Activated CD8-positive, alpha-beta T cell treated with anti-CD3 and anti-CD28 coated beads, Interleukin-2, amount 10 ng/mL, durations not matched to agents 7 days and 5 days (primary cell): ENCODE measurements at regions of chr2 and their contacts with region 1.

Region 1: GRCh38 chr2:136384531-136385303 is 266.8 kb upstream of the CXCR4 start:
- DNase-seq: peak; percentile 71
- ATAC-seq: peak; percentile 65
- H3K4me3 Mint-ChIP-seq: no peak overlapping the region
- H3K27ac Mint-ChIP-seq: no peak overlapping the region
- H3K4me1 Mint-ChIP-seq: peaks cover 48% of the 10 kb centered on the region
- H3K27me3 Mint-ChIP-seq: peaks cover 7% of the 10 kb centered on the region

Region 2: GRCh38 chr2:135876066-135876711 is 508.5 kb before region 1 on chr2 and contains the start of gene MCM6:
- CTCF ChIA-PET with region 1: interaction called, 16 read pairs
- POLR2A ChIA-PET with region 1: interaction called, 9 read pairs
- DNase-seq: peak; percentile 100
- ATAC-seq: peak; percentile 94
- H3K4me3 Mint-ChIP-seq: peak within 1 kb of the TSS; percentile 80
- H3K27ac Mint-ChIP-seq: peak within 1 kb of the TSS; percentile 97
- H3K4me1 Mint-ChIP-seq: peaks cover 47% of the 10 kb centered on the region
- H3K27me3 Mint-ChIP-seq: no peaks in the 10 kb centered on the region
- total RNA-seq, gene MCM6: 144 to 145 TPM

Region 3: DNA sequence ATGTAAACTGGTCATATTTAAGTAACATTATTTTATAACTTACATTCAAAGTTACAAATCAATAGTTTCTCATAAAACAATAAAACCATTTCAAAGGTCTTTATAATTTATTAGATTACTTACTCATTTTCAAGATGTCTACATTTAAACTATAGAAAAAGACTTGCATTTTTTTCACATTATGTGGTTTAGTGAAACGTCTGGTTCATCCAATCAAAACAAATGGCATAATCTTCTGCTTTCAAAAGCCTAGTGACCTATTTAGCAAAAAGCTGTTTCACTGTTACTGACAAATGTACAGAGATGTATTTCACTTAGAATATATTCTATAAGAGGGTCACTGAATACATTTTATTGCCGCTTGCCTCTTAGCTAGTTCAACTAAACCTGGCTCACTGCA is 459.1 kb before region 1 on chr2:
- CTCF ChIA-PET with region 1: interaction called, 12 read pairs
- POLR2A ChIA-PET with region 1: no interaction called
- DNase-seq: no peak
- ATAC-seq: no peak
- H3K4me3 Mint-ChIP-seq: no peak overlapping the region
- H3K27ac Mint-ChIP-seq: no peak overlapping the region
- H3K4me1 Mint-ChIP-seq: peaks cover 6% of the 10 kb centered on the region
- H3K27me3 Mint-ChIP-seq: no peaks in the 10 kb centered on the region

Region 4: GRCh38 chr2:136052369-136053362 is 332.1 kb before region 1 on chr2:
- CTCF ChIA-PET with region 1: interaction called, 12 read pairs
- POLR2A ChIA-PET with region 1: interaction called, 5 read pairs
- DNase-seq: peak; percentile 33
- ATAC-seq: no peak
- H3K4me3 Mint-ChIP-seq: peak overlapping the region; percentile 44
- H3K27ac Mint-ChIP-seq: peak overlapping the region; percentile 95
- H3K4me1 Mint-ChIP-seq: peaks cover 94% of the 10 kb centered on the region
- H3K27me3 Mint-ChIP-seq: no peaks in the 10 kb centered on the region

Region 5: DNA sequence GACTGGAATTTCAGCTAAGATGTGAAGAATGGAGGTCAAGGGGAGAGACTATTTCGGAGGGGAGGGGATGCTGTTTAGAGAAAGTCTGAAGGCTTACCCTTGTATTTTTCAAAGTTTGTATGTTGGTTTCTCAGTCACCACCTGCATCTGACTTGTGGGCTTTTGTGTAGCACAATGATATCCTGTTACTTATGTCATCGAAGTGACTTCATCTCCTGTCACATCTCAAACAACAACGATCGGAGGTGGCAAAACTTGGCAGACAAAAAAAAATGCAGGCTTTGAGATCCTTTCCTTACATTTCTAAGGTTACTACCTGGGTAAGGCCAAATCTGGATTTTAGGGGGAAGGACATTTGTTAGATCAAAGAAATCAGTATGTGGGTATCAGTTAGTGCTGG is 255.1 kb before region 1 on chr2:
- CTCF ChIA-PET with region 1: interaction called, 11 read pairs
- POLR2A ChIA-PET with region 1: interaction called, 6 read pairs
- DNase-seq: peak; percentile 64
- ATAC-seq: peak; percentile 43
- H3K4me3 Mint-ChIP-seq: peak overlapping the region; percentile 53
- H3K27ac Mint-ChIP-seq: peak overlapping the region; percentile 88
- H3K4me1 Mint-ChIP-seq: peaks cover 97% of the 10 kb centered on the region
- H3K27me3 Mint-ChIP-seq: peaks cover 3% of the 10 kb centered on the region

Region 6: GRCh38 chr2:136423516-136423996 is 38.8 kb after region 1 on chr2:
- CTCF ChIA-PET with region 1: interaction called, 16 read pairs
- POLR2A ChIA-PET with region 1: no interaction called
- DNase-seq: peak; percentile 90
- ATAC-seq: peak; percentile 99
- H3K4me3 Mint-ChIP-seq: peak overlapping the region; percentile 75
- H3K27ac Mint-ChIP-seq: peak overlapping the region; percentile 63
- H3K4me1 Mint-ChIP-seq: peaks cover 22% of the 10 kb centered on the region
- H3K27me3 Mint-ChIP-seq: peaks cover 42% of the 10 kb centered on the region

Region 7: DNA sequence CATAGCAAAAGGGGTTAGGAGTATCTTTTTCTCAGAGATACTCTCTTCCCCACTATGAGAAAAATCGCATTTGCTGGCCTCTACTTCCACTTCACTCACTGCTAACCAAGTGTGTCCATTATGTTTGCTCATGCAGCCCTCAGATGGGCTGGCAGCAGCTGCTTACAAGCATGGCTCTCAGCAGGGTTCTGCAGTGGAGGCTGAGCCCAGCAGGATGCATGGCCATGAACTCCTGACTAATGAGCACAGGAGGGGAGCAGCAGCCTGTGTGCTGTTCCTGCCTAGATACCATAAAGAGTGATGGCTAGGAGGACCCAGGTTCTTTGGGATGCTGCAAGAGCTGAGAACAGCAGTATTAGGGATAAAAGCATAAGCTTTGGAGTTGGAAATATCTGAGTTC is 63.7 kb after region 1 on chr2:
- CTCF ChIA-PET with region 1: no interaction called
- POLR2A ChIA-PET with region 1: no interaction called
- DNase-seq: no peak
- ATAC-seq: no peak
- H3K4me3 Mint-ChIP-seq: no peak overlapping the region
- H3K27ac Mint-ChIP-seq: no peak overlapping the region
- H3K4me1 Mint-ChIP-seq: no peaks in the 10 kb centered on the region
- H3K27me3 Mint-ChIP-seq: peaks cover 13% of the 10 kb centered on the region